Lower leg skin (tissue), 4 donors: ENCODE measurements at regions of chr12 and their contacts with region 1.

Region 1: GRCh38 chr12:77615331-77615730 is 215.4 kb upstream of the NAV3 start:
- DNase-seq: no peak
- H3K4me3 ChIP-seq: no peak overlapping the region
- CTCF ChIP-seq: no peak
- POLR2A ChIP-seq: no peak

Region 2: GRCh38 chr12:77648716-77649115 is 33.4 kb after region 1 on chr12:
- intact Hi-C with region 1: loop called (anchors 1 kb)
- DNase-seq: no peak
- H3K4me3 ChIP-seq: no peak overlapping the region
- CTCF ChIP-seq: no peak
- POLR2A ChIP-seq: no peak

Region 3: DNA sequence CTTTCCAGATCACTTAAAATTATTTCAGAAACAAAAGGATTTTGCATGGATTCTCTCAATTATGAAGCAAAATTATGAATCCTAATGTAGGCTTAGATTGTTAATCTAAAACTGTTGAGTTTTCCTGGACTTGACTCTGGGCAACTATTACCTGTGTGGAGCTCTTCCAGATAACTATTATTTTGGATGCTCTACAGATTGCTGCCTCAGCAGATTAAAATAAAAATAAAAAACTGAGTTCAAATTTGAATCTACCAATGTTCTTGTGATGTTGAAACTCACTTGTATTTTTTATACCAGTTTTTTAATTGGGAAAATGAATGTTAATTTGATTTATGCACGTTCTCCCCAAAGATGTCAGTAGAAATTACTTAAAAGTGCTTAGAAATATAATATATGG is 94.9 kb after region 1 on chr12:
- intact Hi-C with region 1: no loop called
- DNase-seq: no peak
- H3K4me3 ChIP-seq: no peak overlapping the region
- CTCF ChIP-seq: no peak
- POLR2A ChIP-seq: no peak